Dorsolateral prefrontal cortex (tissue), 120 donors: ENCODE measurements at regions of chr4 and their contacts with region 1.

Region 1: GRCh38 chr4:139651282-139652194 is 14.1 kb upstream of the MGST2 start:
- DNase-seq: peak; percentile 74 to 88 (median 82)
- H3K4me3 ChIP-seq: peak overlapping the region in 37 of 59 donors; percentile 15 to 54 (median 41)
- H3K27ac ChIP-seq: peak overlapping the region in 38 of 59 donors; percentile 5 to 79 (median 58)
- H3K27me3 ChIP-seq: no peaks in the 10 kb centered on the region
- CTCF ChIP-seq: peak; percentile 84 to 99 (median 95)

Region 2: GRCh38 chr4:139030614-139031235 is 620.8 kb before region 1 on chr4:
- intact Hi-C with region 1: loop called in 1 of 2 experiments (anchors 2 kb)
- DNase-seq: peak; percentile 43 to 87 (median 68)
- H3K4me3 ChIP-seq: peak overlapping the region in 9 of 59 donors; percentile 8 to 31 (median 19)
- H3K27ac ChIP-seq: peak overlapping the region in 11 of 59 donors; percentile 16 to 94 (median 79)
- H3K27me3 ChIP-seq: no peaks in the 10 kb centered on the region
- CTCF ChIP-seq: peak; percentile 75 to 96 (median 85)

Region 3: DNA sequence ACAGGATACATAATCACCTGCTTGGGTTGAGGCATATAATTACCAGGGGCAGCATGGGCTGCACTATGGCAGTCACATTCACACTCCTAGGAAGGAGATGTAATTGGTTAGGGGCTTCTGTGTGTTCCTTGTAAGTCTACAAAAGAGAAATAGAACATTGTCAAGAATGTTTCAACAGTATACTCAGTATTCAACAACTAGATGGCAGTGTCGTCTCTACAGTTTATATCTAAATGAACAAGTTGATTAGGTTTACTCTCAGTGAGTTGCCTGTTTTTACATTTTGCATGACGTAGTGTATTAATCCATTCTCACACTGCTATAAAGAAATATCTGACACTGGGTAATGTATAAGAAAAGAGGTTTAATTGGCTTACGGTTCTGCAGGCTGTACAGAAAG is 248.1 kb before region 1 on chr4:
- intact Hi-C with region 1: loop called in 1 of 2 experiments (anchors 10 kb)
- DNase-seq: no peak
- H3K4me3 ChIP-seq: no peak overlapping the region
- H3K27ac ChIP-seq: peak overlapping the region in 16 of 59 donors; percentile 7 to 70 (median 24)
- H3K27me3 ChIP-seq: no peaks in the 10 kb centered on the region
- CTCF ChIP-seq: peak in 32 of 56 donors; percentile 11 to 46 (median 26)

Region 4: GRCh38 chr4:139493176-139493575 is 158.4 kb before region 1 on chr4:
- intact Hi-C with region 1: loop called in 1 of 2 experiments (anchors 10 kb)
- DNase-seq: peak in 1 of 10 donors; percentile 81
- H3K4me3 ChIP-seq: no peak overlapping the region
- H3K27ac ChIP-seq: peak overlapping the region in 1 of 59 donors; percentile 73
- H3K27me3 ChIP-seq: no peaks in the 10 kb centered on the region
- CTCF ChIP-seq: no peak

Region 5: DNA sequence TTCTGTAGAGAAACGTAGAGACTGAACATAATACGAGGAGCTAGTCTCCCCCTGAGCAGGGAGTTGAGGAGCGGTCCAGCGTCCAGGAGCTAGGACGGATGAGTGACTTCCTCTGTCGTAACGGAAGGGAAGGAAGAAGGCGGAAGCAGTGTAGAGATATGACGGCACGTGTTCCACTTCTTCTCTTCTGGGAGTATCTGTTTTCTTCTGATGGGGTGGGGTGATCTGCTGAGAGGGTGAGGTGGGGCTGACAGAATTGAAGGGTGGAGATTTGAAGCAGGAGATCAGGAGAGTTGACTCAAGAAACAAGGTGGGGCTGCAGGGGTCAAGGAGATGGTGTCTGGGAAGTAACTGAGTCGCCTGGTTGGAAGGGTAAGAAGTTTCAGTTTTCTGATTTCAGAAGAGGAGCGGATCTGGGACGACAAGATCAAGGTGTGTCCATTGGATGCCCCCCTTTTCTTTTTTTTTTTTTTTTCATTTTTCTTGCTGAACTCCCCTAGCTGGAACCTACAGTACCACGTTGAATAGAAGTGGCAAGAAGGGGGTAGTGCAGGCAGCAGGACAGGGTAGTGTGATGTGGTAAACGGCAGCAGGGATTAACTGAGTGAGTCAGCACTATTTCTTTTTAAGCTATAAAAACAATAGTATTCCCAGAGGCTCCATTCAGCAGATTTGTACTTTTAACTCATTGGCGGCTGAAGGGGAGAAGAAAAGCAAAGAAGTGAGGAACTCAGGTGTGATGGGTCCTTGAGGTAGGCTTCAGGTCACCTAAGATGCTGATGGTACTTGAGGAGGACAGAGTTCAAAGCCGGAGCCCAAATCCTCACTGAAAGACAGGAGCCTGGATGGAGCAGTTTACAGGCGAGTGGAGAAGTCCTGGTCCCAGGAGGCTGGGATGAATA is 44.7 kb before region 1 on chr4:
- intact Hi-C with region 1: loop called (anchors 5 kb)
- DNase-seq: no peak
- H3K4me3 ChIP-seq: peak overlapping the region in 6 of 59 donors; percentile 5 to 29 (median 18)
- H3K27ac ChIP-seq: no peak overlapping the region
- H3K27me3 ChIP-seq: peaks cover 0 to 4% (median 0%) of the 10 kb centered on the region in 45 donors
- CTCF ChIP-seq: no peak

Region 6: DNA sequence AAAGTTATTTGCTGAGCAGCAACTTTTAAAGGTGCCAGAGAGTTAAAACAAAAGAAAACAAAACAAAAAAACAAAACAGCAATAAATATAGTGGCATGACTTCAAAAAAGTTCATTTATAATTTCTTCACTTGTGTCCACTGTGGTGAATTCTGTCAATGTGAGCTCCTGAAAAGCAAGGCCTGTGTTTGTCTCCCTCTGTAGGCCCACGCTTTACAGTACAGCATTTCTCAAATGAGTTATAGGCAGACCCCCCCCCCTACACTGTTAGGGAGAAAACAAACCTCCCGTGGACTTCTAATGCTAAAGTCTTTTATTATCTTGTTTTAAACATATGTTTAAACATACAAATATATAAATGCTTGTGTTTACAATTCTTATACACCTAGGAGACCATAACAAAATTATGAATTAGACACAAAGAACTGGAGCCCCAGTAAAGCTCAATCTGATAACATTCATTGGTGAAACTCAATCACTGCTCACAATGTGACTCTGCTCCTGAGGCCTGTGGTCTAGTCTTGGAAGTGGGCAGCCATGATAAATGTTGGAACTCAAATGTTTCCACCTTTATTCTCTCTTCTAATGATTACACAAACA is 675.0 kb after region 1 on chr4:
- intact Hi-C with region 1: loop called in 1 of 2 experiments (anchors 10 kb)
- DNase-seq: peak in 3 of 10 donors; percentile 27 to 66 (median 60)
- H3K4me3 ChIP-seq: no peak overlapping the region
- H3K27ac ChIP-seq: no peak overlapping the region
- H3K27me3 ChIP-seq: no peaks in the 10 kb centered on the region
- CTCF ChIP-seq: peak; percentile 7 to 90 (median 72)